ENCODE measurements at regions of chr11 and their contacts with region 1.

Region 1: GRCh38 chr11:47004595-47005033 is 68.1 kb downstream of the CSTPP1 start:
- DNase-seq: peak; percentile 98
- ATAC-seq: peak; percentile 99
- H3K4me3 ChIP-seq: no peak overlapping the region
- H3K27ac ChIP-seq: no peak overlapping the region
- H3K4me1 ChIP-seq: 0 out of 2 replicates have a peak, but pooled peaks cover 5% of the 10 kb centered on the region
- H3K27me3 ChIP-seq: no peaks in the 10 kb centered on the region
- CTCF ChIP-seq: no peak
- POLR2A ChIP-seq: no peak
- RAD21 ChIP-seq: peak; percentile 32; the same call in 1 of the 2 replicates

Region 2: GRCh38 chr11:46916286-46917108 is 88.1 kb before region 1 on chr11:
- CTCF ChIA-PET with region 1: interaction called, 3 read pairs
- POLR2A ChIA-PET with region 1: no interaction called
- dilution Hi-C with region 1: no loop called
- in situ Hi-C with region 1: no loop called
- intact Hi-C with region 1: loop called (anchors 5 kb)
- DNase-seq: peak; percentile 78
- ATAC-seq: peak; percentile 52
- H3K4me3 ChIP-seq: peak overlapping the region; percentile 59
- H3K27ac ChIP-seq: no peak overlapping the region
- H3K4me1 ChIP-seq: peaks cover 13% of the 10 kb centered on the region
- H3K27me3 ChIP-seq: no peaks in the 10 kb centered on the region
- CTCF ChIP-seq: peak; percentile 34; the same call in 1 of the 2 replicates
- POLR2A ChIP-seq: no peak
- RAD21 ChIP-seq: no peak; the same call in 1 of the 2 replicates

Region 3: GRCh38 chr11:46936138-46937110 is 68.2 kb before region 1 on chr11 and contains the start of gene CSTPP1:
- CTCF ChIA-PET with region 1: interaction called, 5 read pairs
- POLR2A ChIA-PET with region 1: no interaction called
- dilution Hi-C with region 1: no loop called
- in situ Hi-C with region 1: no loop called
- intact Hi-C with region 1: loop called (anchors 5 kb)
- DNase-seq: peak; percentile 92
- ATAC-seq: peak; percentile 100
- H3K4me3 ChIP-seq: peak within 1 kb of the TSS; percentile 72
- H3K27ac ChIP-seq: peak within 1 kb of the TSS; percentile 69
- H3K4me1 ChIP-seq: no peaks in the 10 kb centered on the region; the same call in 1 of the 2 replicates
- H3K27me3 ChIP-seq: no peaks in the 10 kb centered on the region
- CTCF ChIP-seq: no peak
- POLR2A ChIP-seq: no peak
- RAD21 ChIP-seq: peak; percentile 35; the same call in 1 of the 2 replicates
- total RNA-seq, gene CSTPP1: 21.1 and 22.0 TPM in 2 replicates

Region 4: GRCh38 chr11:47143322-47143721 is 138.7 kb after region 1 on chr11:
- CTCF ChIA-PET with region 1: no interaction called
- POLR2A ChIA-PET with region 1: no interaction called
- dilution Hi-C with region 1: no loop called
- in situ Hi-C with region 1: no loop called
- intact Hi-C with region 1: loop called (anchors 10 kb)
- DNase-seq: peak; percentile 97
- ATAC-seq: peak; percentile 100
- H3K4me3 ChIP-seq: no peak overlapping the region
- H3K27ac ChIP-seq: peak overlapping the region; percentile 61; the same call in 1 of the 2 replicates
- H3K4me1 ChIP-seq: peaks cover 10% of the 10 kb centered on the region
- H3K27me3 ChIP-seq: no peaks in the 10 kb centered on the region
- CTCF ChIP-seq: no peak
- POLR2A ChIP-seq: no peak
- RAD21 ChIP-seq: peak; percentile 28; the same call in 1 of the 2 replicates

Measured in IMR-90 (cell line).